Ovary (tissue), 10 donors: ENCODE measurements at regions of chr1 and their contacts with region 1.

Region 1: GRCh38 chr1:22289307-22289995 is 146.6 kb upstream of the WNT4 start:
- DNase-seq: peak in 2 of 5 donors; percentile 38 to 61
- H3K4me3 ChIP-seq: no peak overlapping the region
- H3K27ac ChIP-seq: peak overlapping the region in 1 of 2 donors; percentile 13
- H3K4me1 ChIP-seq: peaks cover 10% of the 10 kb centered on the region
- H3K27me3 ChIP-seq: no peaks in the 10 kb centered on the region
- CTCF ChIP-seq: no peak
- EP300 ChIP-seq: no peak
- POLR2A ChIP-seq: no peak

Region 2: GRCh38 chr1:22332795-22333499 is 43.5 kb after region 1 on chr1:
- intact Hi-C with region 1: loop called in 1 of 4 experiments (anchors 10 kb)
- DNase-seq: no peak
- H3K4me3 ChIP-seq: no peak overlapping the region
- H3K27ac ChIP-seq: no peak overlapping the region
- H3K4me1 ChIP-seq: peaks cover 2% of the 10 kb centered on the region
- H3K27me3 ChIP-seq: no peaks in the 10 kb centered on the region
- CTCF ChIP-seq: no peak
- EP300 ChIP-seq: no peak
- POLR2A ChIP-seq: no peak

Region 3: DNA sequence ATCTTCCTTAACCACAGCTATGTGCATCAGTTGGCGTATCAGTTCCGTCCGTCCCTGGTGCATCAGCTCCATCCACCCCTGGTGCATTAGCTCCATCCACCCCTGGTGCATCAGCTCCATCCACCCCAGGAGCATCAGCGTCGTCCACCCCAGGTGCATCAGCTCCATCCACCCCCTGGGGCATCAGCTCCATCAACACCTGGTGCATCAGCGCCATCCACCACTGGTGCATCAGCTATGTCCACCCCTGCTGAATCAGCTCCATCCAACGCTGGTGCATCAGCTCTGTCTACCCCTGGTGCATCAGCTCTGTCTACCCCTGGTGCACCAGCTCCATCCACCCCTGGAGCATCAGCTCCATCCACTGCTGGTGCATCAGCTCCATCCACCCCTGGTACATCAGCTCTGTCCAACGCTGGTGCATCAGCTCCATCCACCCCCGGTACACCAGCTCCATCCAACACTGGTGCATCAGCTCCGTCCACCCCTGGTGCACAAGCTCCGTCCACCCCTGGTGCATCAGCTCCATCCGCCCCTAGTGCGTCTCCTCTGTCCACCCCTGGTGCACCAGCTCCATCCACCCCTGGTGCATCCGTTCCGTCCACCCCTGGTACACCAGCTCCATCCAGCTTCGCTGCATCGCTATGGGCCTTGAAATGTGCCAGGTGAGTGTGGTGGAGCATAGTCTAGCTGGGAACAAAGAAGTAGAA is 55.6 kb after region 1 on chr1:
- intact Hi-C with region 1: no loop called
- DNase-seq: no peak
- H3K4me3 ChIP-seq: no peak overlapping the region
- H3K27ac ChIP-seq: no peak overlapping the region
- H3K4me1 ChIP-seq: peaks cover 3% of the 10 kb centered on the region
- H3K27me3 ChIP-seq: no peaks in the 10 kb centered on the region
- CTCF ChIP-seq: no peak
- EP300 ChIP-seq: no peak
- POLR2A ChIP-seq: no peak

Region 4: GRCh38 chr1:22625262-22625925 is 335.9 kb after region 1 on chr1:
- intact Hi-C with region 1: no loop called
- DNase-seq: no peak
- H3K4me3 ChIP-seq: no peak overlapping the region
- H3K27ac ChIP-seq: no peak overlapping the region
- H3K4me1 ChIP-seq: no peaks in the 10 kb centered on the region
- H3K27me3 ChIP-seq: no peaks in the 10 kb centered on the region
- CTCF ChIP-seq: no peak
- EP300 ChIP-seq: no peak
- POLR2A ChIP-seq: no peak